RWPE1 (cell line): ENCODE measurements at regions of chr4 and their contacts with region 1.

Region 1: DNA sequence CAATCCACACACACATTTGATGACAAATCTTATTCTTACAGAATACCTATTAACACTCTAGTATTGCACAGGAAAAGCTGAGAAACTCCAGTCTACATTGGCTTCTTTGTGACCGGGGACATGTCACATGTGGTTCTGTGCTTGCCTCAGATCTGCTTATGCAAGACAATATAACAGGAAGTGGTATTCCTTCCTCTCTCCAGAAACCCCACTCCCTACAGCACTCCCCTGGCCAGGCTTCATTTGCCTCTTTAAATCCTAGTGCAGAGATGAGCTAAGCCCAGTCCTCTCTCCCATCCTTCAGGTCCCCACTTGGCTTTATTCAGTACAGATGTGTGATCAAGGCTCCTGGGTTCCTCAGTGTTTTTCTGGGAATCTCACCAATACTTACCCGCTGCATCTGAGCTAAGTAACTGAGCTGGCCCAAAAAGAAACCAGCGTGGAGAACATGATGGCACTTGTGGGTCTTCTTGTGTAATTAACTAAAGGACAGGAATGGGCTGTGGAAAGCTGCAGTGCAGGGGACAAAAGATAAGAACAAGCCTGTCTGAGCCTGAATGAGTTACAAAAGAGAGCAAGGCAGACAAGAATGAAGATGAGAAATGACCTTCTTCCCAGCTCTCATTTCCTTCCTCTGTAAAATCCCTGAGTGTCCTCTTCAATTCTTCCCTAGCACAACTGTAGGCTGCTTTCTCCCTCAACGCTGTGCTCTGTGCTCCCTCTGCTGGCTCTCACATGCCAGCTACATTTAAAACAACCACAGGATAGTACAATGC is 105.6 kb downstream of the HNRNPD start:
- DNase-seq: peak; percentile 66
- H3K27ac ChIP-seq: no peak overlapping the region
- CTCF ChIP-seq: peak; percentile 89

Region 2: GRCh38 chr4:82256718-82257117 is 11.5 kb before region 1 on chr4:
- CTCF ChIA-PET with region 1: interaction called, 16 read pairs
- POLR2A ChIA-PET with region 1: no interaction called
- DNase-seq: no peak
- H3K27ac ChIP-seq: no peak overlapping the region
- CTCF ChIP-seq: no peak

Region 3: GRCh38 chr4:82402201-82402775 is 134.1 kb after region 1 on chr4:
- CTCF ChIA-PET with region 1: no interaction called
- POLR2A ChIA-PET with region 1: no interaction called
- DNase-seq: no peak
- H3K27ac ChIP-seq: no peak overlapping the region
- CTCF ChIP-seq: no peak

Region 4: GRCh38 chr4:82842593-82842992 is 574.4 kb after region 1 on chr4:
- CTCF ChIA-PET with region 1: no interaction called
- POLR2A ChIA-PET with region 1: no interaction called
- DNase-seq: peak; percentile 5
- H3K27ac ChIP-seq: no peak overlapping the region
- CTCF ChIP-seq: peak; percentile 25